HCT116 (cell line): ENCODE measurements at regions of chr22 and their contacts with region 1.

Region 1: DNA sequence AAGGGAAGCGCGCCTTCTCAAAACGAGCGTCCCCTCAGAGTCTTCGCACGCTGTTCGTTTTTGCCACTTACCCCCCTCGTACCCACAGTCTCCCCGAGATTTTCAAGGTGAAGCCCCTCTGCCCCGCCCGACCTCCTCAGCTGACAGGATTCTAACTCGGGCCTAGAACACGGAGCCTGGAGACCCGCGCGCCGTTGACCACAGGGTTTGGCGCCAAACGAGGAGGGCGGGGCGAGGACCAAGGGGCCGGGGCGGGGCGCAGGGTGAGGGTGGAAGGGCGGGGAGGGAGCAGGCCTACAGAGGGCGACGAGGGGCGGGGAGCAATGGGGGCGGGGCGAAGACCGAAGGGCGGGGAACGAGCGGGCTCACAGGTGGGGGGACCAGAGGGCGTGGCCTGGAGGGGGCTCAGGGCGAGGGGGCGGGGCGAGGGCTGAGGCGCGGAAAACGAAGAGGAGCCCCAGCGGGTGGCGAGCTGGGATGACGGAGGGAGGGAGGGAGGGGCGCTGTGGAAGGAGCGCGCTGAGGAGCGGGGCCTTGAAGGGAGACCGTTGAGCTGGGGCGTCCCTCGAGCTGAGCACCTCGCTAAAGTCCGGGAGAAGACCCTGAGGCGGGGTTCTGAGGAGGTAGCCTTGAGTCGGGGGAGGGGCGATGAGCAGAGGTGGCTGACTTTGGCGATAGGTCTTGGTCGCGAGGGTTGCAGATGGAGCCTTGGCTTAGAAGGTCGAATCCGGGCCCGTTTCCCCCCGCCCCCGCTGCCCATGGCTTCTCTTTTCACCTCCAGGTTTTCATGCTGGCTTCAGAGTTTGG is at the start of gene DMC1:
- DNase-seq: peak; percentile 79
- ATAC-seq: peak; percentile 90
- H3K4me3 ChIP-seq: peak within 1 kb of the TSS; percentile 53 to 58
- H3K27ac ChIP-seq: peak within 1 kb of the TSS; percentile 53
- H3K4me1 ChIP-seq: peaks cover 8 to 20% of the 10 kb centered on the region in 2 experiments; a peak in 3 of 4 replicates
- H3K27me3 ChIP-seq: no peaks in the 10 kb centered on the region
- CTCF ChIP-seq: no peak
- POLR2A ChIP-seq: no peak
- RAD21 ChIP-seq: no peak
- total RNA-seq, gene DMC1: 0.89 TPM

Region 2: DNA sequence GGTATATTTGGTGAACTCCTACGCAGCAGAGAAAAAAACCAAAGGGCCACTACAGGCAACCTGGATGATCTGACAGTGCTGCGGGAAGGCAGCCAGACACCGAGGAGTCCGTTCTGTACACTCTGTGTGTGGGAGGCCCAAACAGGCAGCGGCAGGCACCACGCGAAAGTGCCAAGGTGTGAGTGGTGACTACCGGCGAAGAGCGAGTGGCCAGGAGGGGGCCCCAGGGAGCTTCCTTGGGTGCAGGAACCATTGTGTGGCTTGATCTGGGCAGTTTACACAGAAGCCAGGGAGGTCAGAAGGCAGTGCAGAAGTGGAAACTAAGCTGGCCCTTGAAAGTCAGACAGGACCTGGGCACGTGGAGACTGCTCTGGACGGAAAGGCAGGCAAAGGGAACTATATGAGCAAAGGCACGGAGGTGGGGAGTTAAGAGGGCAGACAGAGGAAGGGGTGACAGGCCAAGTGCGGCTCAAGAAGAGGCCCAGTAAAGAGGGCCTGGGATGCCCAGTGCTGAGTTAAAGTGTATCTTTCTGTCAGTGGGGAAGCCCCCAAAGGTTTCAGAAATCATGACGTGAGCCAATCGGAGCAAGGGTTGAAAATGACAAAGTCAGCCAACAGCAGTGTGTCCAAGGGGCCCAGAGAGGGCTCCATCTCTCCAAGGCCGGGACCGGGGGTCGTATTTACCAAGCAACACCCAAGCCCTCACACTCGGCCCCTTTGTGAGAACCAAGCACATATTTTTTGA is 308.0 kb before region 1 on chr22:
- CTCF ChIA-PET with region 1: no interaction called
- POLR2A ChIA-PET with region 1: no interaction called
- RAD21 ChIA-PET with region 1: no interaction called
- intact Hi-C with region 1: loop called (anchors 2 kb)
- DNase-seq: no peak
- ATAC-seq: peak; percentile 96
- H3K4me3 ChIP-seq: no peak overlapping the region
- H3K27ac ChIP-seq: no peak overlapping the region
- H3K4me1 ChIP-seq: peaks cover 5 to 6% of the 10 kb centered on the region in 2 experiments; a peak in 2 of 4 replicates
- H3K27me3 ChIP-seq: no peaks in the 10 kb centered on the region
- CTCF ChIP-seq: peak; percentile 60 to 83 (median 70); a peak in 5 of 6 replicates
- POLR2A ChIP-seq: no peak
- RAD21 ChIP-seq: peak; percentile 70

Region 3: DNA sequence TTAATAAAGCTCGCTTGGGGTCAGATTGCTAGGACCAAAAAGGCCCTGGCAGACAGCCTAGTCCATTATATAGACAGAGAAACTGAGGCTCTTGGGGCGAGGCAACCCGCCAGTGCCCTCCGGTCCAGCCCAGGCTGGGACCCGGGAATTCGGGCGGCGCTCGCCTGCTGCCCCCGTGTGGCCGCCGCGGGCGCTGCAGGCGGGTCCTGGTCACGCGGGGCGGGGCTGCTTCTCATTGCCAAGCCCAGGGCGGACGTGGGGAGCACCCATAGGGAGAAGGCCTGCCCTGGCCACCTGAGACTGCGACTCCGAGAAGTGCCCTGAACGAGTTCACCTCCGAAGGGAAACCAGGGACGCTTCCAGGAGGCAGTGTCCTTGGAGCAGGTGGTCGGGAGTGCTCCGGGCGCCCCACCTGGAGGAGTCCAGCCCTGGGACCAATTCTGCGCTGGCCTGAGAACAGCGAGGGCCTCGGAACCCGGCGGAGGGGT is 217.0 kb before region 1 on chr22:
- CTCF ChIA-PET with region 1: no interaction called
- POLR2A ChIA-PET with region 1: no interaction called
- RAD21 ChIA-PET with region 1: no interaction called
- intact Hi-C with region 1: loop called (anchors 2 kb)
- DNase-seq: peak; percentile 8
- ATAC-seq: peak; percentile 90
- H3K4me3 ChIP-seq: no peak overlapping the region
- H3K27ac ChIP-seq: no peak overlapping the region
- H3K4me1 ChIP-seq: peaks cover 0 to 6% of the 10 kb centered on the region in 2 experiments; a peak in 1 of 4 replicates
- H3K27me3 ChIP-seq: no peaks in the 10 kb centered on the region
- CTCF ChIP-seq: peak; percentile 81 to 96 (median 94)
- POLR2A ChIP-seq: no peak
- RAD21 ChIP-seq: peak; percentile 90

Region 4: GRCh38 chr22:38422611-38423511 is 147.3 kb before region 1 on chr22:
- CTCF ChIA-PET with region 1: no interaction called
- POLR2A ChIA-PET with region 1: no interaction called
- RAD21 ChIA-PET with region 1: no interaction called
- intact Hi-C with region 1: no loop called
- DNase-seq: no peak
- ATAC-seq: peak; percentile 79
- H3K4me3 ChIP-seq: no peak overlapping the region
- H3K27ac ChIP-seq: peak overlapping the region; percentile 2; the same call in 1 of the 2 replicates
- H3K4me1 ChIP-seq: peaks cover 8 to 31% of the 10 kb centered on the region in 2 experiments
- H3K27me3 ChIP-seq: no peaks in the 10 kb centered on the region
- CTCF ChIP-seq: no peak
- POLR2A ChIP-seq: no peak
- RAD21 ChIP-seq: no peak